AG04449 (cell line): ENCODE measurements at regions of chr6 and their contacts with region 1.

Region 1: GRCh38 chr6:127516666-127517273 is 2.4 kb downstream of the MTCL3 start:
- DNase-seq: no peak
- H3K4me3 ChIP-seq: peak overlapping the region; percentile 71
- CTCF ChIP-seq: peak; percentile 80

Region 2: DNA sequence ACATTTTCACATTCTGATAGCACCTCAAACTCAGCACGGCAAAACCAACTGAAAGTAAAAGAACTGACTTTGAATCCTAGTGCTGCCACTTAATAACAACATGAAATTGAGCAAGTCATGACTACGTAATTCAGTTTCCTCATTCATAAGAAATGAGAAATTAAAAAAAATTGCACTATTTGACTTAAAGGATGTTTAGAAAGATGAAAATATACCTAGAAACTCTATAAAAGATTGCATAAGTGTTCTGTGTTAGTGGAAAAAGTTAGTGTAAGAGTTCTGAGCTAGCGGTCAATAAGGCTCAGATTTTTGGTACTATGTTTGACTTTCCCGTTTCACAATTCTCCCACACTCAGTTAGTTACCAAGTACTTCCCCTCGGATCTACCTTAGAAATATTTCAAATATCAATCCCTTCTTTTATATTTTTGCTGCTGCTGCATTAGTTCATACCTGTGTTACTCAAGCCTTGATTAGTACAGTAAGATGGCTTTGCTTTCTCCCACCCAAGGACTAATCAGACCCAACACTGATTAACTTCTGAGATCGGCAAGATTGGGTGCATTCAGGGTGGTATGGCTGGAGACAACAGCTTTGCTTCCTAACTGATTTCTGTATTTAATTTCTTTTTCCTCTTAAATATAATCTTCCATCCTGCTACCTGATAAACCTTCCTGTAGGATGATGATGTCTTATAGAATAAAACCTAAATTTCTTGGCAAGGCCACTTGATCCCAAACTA is 199.2 kb before region 1 on chr6:
- CTCF ChIA-PET with region 1: interaction called, 15 read pairs
- POLR2A ChIA-PET with region 1: no interaction called
- DNase-seq: no peak
- H3K4me3 ChIP-seq: no peak overlapping the region
- CTCF ChIP-seq: no peak

Region 3: GRCh38 chr6:127459231-127459641 is 57.5 kb before region 1 on chr6 and contains the start of gene KIAA0408:
- CTCF ChIA-PET with region 1: interaction called, 23 read pairs
- POLR2A ChIA-PET with region 1: no interaction called
- DNase-seq: peak; percentile 36
- H3K4me3 ChIP-seq: peak within 1 kb of the TSS; percentile 9
- CTCF ChIP-seq: no peak

Region 4: DNA sequence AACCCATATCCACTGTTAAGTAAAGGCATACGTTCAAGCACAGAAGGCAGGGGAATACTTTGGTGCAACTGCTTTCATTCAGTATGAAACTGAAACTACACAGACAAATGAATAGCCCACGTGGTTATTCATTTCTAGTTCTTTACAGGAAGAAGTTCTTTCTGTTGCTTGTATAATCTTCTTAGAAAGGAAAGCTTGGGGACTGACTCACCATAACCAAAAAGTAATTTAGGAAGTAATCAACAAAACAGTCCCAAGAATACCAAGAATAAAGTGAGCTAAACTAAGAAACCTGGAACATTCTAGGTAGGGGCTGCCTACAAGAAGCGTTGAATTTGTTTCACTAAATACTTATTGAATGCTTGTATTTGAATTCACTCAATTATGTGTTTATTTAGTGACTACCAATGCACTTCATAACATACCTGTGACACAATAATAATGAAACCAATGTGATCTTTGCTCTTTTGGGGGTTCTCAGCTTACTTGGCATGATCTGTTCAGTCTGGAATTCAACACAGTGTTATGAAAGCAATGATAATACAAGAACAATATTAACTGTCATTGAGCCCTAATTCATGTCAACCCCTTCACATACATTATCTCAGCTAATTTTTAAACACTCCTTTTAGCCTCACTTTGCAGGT is 32.4 kb before region 1 on chr6:
- CTCF ChIA-PET with region 1: interaction called, 30 read pairs
- POLR2A ChIA-PET with region 1: interaction called, 3 read pairs
- DNase-seq: no peak
- H3K4me3 ChIP-seq: no peak overlapping the region; the same call in 1 of the 2 replicates
- CTCF ChIP-seq: no peak

Region 5: DNA sequence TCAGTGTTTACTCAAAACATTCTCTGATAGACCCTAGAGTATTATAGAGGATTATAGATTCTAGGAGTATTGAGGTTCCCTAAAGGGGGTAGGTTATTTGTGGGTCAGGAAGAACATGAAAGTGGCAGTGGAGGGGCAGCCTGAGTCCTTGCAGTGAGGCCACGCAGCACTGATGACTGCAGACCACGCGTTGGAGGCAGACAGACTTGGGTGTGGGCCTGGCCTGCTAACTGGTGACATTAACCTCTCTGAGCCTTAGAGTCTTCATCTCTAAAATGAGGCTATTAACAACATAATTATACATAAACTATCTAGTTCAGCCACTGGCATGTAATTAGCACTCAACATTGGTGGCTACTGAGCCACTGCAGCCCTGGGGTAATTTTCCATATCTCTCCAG is 13.7 kb before region 1 on chr6:
- CTCF ChIA-PET with region 1: interaction called, 97 read pairs
- POLR2A ChIA-PET with region 1: no interaction called
- DNase-seq: no peak
- H3K4me3 ChIP-seq: no peak overlapping the region
- CTCF ChIP-seq: no peak

Region 6: DNA sequence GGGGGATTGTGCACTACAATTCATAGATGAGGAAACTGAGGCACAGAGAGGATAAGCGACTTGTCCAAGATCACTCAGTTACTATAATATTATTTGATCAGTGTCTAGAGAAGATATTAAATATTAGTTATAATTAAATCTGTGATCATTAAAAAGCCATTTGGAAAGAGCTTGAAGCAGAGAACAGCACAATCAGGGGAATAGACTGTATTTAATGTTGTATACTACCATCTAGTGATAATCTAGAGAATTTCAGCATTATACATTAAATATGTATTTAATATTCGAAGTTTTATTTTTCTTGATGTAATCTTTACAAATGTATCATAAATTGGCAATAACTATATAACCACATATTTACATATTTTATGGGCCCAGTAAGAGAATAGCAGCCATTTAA is 22.5 kb after region 1 on chr6:
- CTCF ChIA-PET with region 1: interaction called, 58 read pairs
- POLR2A ChIA-PET with region 1: interaction called, 3 read pairs
- DNase-seq: no peak
- H3K4me3 ChIP-seq: no peak overlapping the region
- CTCF ChIP-seq: no peak

Region 7: DNA sequence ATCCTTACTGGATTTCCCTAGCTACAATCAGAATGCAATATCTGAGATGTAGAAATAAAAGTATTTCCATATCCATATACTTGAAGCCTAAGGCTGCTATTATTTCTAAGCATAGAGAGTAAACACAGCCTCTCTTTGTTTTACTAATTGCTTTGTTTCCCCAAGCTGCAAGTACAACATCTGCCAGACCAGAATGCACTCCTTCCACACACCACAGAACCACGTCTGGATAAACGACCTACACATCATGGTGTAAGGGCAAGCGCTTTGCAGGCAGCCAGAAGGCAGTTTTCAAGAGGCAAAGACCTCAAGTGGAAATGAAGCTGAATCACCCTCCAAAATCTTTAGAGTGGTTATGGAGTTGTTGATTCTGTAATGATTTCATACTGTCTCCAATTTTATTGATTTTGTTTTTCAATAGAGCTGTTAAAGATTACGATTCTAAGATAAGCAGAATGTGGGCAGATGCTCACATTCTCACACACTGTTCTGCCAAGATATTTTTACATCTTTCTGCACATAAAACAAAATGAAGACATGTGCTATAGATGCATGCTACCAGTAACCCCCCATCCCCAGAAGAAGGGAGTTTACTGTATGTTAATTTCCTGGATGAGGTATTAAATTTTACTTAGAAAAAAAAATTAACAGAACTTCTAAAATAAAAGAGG is 295.3 kb after region 1 on chr6:
- CTCF ChIA-PET with region 1: no interaction called
- POLR2A ChIA-PET with region 1: no interaction called
- DNase-seq: no peak
- H3K4me3 ChIP-seq: no peak overlapping the region
- CTCF ChIP-seq: no peak